Activated naive CD4-positive, alpha-beta T cell treated with anti-CD3 and anti-CD28 coated beads for 36 hours (primary cell): ENCODE measurements at regions of chr2 and their contacts with region 1.

Region 1: GRCh38 chr2:135052042-135052876 is at the start of gene RAB3GAP1:
- DNase-seq: peak; percentile 97
- H3K4me3 Mint-ChIP-seq: peak within 1 kb of the TSS; percentile 99
- H3K27ac Mint-ChIP-seq: peak within 1 kb of the TSS; percentile 100
- H3K4me1 Mint-ChIP-seq: peaks cover 40% of the 10 kb centered on the region
- H3K27me3 Mint-ChIP-seq: no peaks in the 10 kb centered on the region
- total RNA-seq, gene RAB3GAP1: 55.5 to 59.7 TPM

Region 2: DNA sequence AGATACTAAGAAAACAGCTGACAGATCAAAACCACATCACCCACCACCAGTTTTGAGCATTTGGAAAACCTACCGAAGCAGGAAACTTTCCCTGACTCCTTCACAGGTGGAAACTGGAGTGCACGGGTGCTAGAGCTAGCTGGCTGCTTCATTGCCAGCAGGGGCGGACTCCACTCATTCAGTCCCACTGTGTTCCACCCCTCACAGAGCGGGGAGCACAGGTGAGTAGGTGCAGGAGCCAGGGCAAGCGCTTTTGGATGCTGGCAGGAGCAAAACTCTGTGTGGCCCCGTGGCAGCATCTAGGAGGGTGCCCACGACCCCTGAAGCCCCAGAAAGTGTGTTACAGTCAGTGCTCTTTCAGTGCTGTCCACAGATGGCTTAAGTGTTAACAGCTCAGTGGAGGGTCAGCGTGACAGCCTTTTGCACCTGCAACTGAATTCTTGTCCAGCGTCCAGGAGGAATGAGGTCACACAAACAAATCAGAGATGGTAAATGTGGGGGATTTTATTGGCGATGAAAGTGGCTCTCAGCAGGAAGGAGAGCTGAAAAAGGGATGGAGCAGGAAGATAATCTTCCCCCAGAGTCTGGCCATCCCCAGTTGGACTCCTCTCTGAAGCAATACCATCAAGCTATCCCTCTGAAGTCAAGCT is 404.5 kb before region 1 on chr2:
- CTCF ChIA-PET with region 1: no interaction called
- intact Hi-C with region 1: no loop called
- DNase-seq: no peak
- H3K4me3 Mint-ChIP-seq: no peak overlapping the region
- H3K27ac Mint-ChIP-seq: no peak overlapping the region
- H3K4me1 Mint-ChIP-seq: no peaks in the 10 kb centered on the region
- H3K27me3 Mint-ChIP-seq: peaks cover 2% of the 10 kb centered on the region

Region 3: GRCh38 chr2:134668821-134669220 is 383.4 kb before region 1 on chr2:
- CTCF ChIA-PET with region 1: no interaction called
- intact Hi-C with region 1: loop called (anchors 5 kb)
- DNase-seq: peak; percentile 95
- H3K4me3 Mint-ChIP-seq: no peak overlapping the region
- H3K27ac Mint-ChIP-seq: no peak overlapping the region
- H3K4me1 Mint-ChIP-seq: peaks cover 63% of the 10 kb centered on the region
- H3K27me3 Mint-ChIP-seq: peaks cover 29% of the 10 kb centered on the region

Region 4: DNA sequence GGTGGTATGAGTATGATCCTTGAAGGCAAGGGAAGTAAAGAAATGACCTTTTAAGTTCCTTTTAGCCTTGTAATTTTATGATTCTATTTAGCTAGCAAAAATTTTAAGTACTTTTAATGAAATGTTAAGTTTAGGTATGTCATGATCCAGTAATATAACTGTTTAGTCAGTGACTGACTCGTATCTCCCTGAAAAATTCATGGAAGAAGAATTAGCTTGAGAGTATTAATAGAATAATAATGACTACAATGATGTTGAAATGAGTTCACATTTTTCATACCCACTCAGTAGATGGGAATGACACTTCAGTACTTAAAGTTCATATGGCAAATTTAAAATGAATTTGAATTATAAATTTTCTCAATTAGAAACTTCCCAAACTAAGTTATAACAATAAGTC is 14.5 kb after region 1 on chr2:
- CTCF ChIA-PET with region 1: interaction called, 4 read pairs
- intact Hi-C with region 1: loop called (anchors 1 kb)
- DNase-seq: no peak
- H3K4me3 Mint-ChIP-seq: no peak overlapping the region
- H3K27ac Mint-ChIP-seq: peak overlapping the region; percentile 13
- H3K4me1 Mint-ChIP-seq: peaks cover 59% of the 10 kb centered on the region
- H3K27me3 Mint-ChIP-seq: no peaks in the 10 kb centered on the region

Region 5: DNA sequence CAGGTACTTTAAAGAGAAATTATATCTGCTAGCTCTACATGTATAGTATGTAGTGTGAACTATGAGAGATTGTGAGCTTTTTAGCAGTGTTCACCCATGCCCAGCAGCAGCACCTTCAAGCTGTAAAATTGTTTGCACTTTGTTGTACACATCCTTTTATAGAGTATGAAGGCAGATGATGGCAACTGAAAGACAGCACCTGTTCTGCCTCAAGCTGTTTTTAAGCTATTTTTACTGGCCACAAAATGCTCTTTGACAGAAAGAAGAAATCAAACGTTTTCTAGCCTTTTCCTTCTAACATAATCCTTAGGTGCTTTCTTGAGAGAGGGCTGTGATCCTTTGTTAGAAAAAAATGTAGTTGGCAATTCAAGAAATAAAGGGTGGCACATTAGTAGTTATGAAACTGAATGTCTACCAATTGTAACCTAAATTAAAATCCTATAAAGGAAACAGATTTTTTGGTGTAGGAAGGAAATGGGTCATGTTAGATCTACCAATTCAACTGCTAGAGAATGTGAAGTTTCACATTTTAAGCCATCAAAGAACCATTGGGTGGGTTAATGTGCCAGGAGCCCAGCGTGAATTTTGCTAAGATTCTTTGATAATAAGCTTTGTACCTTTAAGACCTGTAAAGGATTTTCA is 538.5 kb after region 1 on chr2:
- CTCF ChIA-PET with region 1: no interaction called
- intact Hi-C with region 1: loop called (anchors 5 kb)
- DNase-seq: no peak
- H3K4me3 Mint-ChIP-seq: no peak overlapping the region
- H3K27ac Mint-ChIP-seq: no peak overlapping the region
- H3K4me1 Mint-ChIP-seq: peaks cover 37% of the 10 kb centered on the region
- H3K27me3 Mint-ChIP-seq: no peaks in the 10 kb centered on the region

Region 6: DNA sequence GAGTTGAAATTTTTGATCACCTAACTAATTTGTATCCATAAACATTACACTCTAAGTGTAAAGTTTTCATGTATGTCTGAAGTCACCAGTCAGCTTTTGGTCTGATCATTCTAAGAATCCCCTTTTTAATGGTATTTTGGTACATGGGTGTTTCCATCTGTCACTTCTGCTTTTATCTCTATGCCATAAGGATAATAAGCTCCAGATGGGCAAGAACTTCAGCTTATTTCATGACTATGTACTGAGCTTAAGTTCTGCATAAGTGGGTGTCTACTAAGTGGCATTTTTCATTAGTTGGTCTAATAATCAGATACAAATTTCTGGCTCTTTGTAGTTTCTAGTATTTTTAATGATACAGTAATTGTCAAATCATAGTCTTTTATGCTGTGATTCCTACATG is 709.8 kb after region 1 on chr2:
- CTCF ChIA-PET with region 1: no interaction called
- intact Hi-C with region 1: no loop called
- DNase-seq: no peak
- H3K4me3 Mint-ChIP-seq: no peak overlapping the region
- H3K27ac Mint-ChIP-seq: no peak overlapping the region
- H3K4me1 Mint-ChIP-seq: peaks cover 14% of the 10 kb centered on the region
- H3K27me3 Mint-ChIP-seq: no peaks in the 10 kb centered on the region

Region 7: DNA sequence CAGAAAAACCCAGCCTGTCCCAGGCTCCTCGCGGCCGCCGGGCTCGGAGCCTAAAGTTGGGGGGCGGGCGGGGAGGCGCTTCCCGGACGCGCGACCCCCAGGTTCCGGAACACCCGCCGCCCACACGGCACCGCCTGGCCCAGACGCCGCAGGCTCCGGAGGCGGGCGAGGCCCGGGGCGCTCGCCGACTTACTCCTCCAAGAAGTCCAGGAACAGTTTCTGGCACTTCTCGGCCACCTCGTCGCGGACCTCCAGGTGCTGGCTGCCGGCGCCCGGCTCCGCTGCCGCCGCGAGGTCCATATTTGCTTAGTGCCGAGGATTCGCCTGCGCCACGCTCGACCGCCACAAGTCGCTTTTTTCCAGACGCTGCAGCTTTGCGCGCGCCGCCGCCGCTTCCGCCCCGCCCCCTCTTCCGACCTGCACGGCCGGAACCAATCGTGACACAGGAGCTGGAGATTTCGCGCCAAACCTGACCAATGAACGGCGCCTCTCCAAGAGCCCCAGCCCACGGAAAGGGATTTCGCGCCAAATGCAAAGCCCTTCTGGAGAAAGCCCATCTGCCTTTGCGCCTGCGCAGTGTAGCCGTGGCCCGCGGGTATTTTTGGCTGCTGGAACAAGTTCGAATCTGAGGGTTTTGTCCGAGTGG is 823.9 kb after region 1 on chr2 and contains the start of gene MCM6:
- CTCF ChIA-PET with region 1: no interaction called
- intact Hi-C with region 1: loop called (anchors 1 kb)
- DNase-seq: peak; percentile 100
- H3K4me3 Mint-ChIP-seq: peak within 1 kb of the TSS; percentile 91
- H3K27ac Mint-ChIP-seq: peak within 1 kb of the TSS; percentile 99
- H3K4me1 Mint-ChIP-seq: peaks cover 39% of the 10 kb centered on the region
- H3K27me3 Mint-ChIP-seq: no peaks in the 10 kb centered on the region
- total RNA-seq, gene MCM6: 221 to 226 TPM

Region 8: DNA sequence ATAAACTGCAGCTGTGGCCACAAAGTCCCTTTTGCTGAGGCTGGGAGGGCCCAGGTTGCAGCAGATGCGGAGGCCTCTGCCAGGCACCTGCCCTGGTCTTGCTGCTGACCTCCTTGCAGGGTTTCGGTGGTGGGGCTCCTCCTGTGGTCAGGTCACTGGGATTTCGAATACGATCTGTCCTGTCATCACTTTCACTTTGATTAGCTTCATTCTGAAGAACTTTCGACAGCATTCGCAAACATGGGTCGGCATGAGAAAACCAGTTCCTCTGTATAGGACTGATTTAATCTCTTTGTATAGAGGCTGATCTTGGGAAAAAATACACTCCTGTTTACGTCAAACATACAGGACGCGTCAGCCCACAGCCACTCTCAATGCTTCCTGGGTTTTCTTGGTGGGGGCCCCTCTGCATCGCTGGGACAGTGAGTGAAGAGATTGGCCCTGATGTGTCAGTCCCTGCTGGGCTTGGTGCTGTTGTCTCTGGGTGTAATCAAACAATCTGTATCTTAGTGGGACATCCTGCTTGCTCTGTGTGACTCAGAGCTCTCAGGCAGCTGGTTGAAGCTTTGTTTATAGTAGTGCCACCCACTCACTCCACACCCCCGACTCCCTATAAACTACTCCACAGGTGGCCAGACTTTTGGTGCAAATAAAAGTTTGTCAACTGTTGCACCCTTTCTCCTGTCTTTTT is 1275.0 kb after region 1 on chr2:
- CTCF ChIA-PET with region 1: no interaction called
- intact Hi-C with region 1: loop called (anchors 10 kb)
- DNase-seq: peak; percentile 89
- H3K4me3 Mint-ChIP-seq: peak overlapping the region; percentile 52
- H3K27ac Mint-ChIP-seq: peak overlapping the region; percentile 82
- H3K4me1 Mint-ChIP-seq: peaks cover 62% of the 10 kb centered on the region
- H3K27me3 Mint-ChIP-seq: no peaks in the 10 kb centered on the region